ENCODE measurements at regions of chr2 and their contacts with region 1.

Region 1: GRCh38 chr2:218269899-218270720 is at the starts of genes AAMP and PNKD:
- DNase-seq: peak; percentile 100
- ATAC-seq: peak; percentile 83
- H3K4me3 ChIP-seq: peak within 1 kb of the TSS; percentile 69 to 99 (median 97)
- H3K4me3 Mint-ChIP-seq: peak within 1 kb of the TSS; percentile 84
- H3K27ac ChIP-seq: peak within 1 kb of the TSS; percentile 49 to 82
- H3K27ac Mint-ChIP-seq: peak within 1 kb of the TSS; percentile 86
- H3K4me1 ChIP-seq: peaks cover 36 to 53% of the 10 kb centered on the region in 2 donors
- H3K4me1 Mint-ChIP-seq: peaks cover 59% of the 10 kb centered on the region
- H3K27me3 ChIP-seq: no peaks in the 10 kb centered on the region
- H3K27me3 Mint-ChIP-seq: no peaks in the 10 kb centered on the region
- CTCF ChIP-seq: no peak
- total RNA-seq, gene AAMP: 62.7 and 65.7 TPM in 2 replicates
- total RNA-seq, gene PNKD: 29.7 and 30.7 TPM in 2 replicates

Region 2: DNA sequence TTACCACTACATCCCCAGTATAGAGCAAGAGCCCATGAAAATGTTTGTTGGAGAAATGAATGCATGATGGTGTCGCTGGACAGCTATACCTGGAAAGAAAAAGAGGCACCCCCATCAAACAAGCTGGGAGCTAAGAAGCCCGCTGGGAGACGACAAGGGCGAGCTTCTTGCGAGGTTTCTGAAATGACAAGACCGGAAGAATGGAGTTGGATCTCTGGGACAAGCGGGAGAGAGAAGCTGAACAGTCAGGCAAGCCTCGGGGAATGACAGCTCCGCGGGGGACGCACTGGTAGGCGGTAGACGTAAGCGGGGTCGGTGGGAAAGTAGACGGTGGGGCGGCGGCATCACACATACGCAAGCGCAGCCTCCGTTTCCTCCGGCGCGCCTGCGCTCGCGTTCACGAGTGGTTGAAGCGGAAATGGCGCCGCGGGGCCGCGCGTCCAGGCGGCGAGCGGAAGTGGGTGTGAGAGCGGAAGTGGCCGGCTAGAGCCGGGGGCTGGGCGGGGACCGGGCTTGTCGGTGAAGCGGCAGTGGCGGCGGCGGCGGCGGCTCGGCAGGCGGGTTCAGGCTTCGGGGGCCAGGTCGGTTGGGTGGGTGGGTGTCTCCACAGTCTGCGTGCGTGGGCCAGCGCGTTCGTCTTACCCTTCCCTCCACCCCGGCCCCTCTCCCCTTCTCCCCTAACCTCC is 53.3 kb before region 1 on chr2 and contains the start of gene ARPC2:
- CTCF ChIA-PET with region 1: interaction called, 16 read pairs
- POLR2A ChIA-PET with region 1: interaction called, 11 read pairs
- intact Hi-C with region 1: loop called (anchors 1 kb)
- DNase-seq: peak; percentile 98
- ATAC-seq: peak; percentile 74
- H3K4me3 ChIP-seq: peak within 1 kb of the TSS; percentile 93 to 99 (median 97)
- H3K4me3 Mint-ChIP-seq: peak within 1 kb of the TSS; percentile 90
- H3K27ac ChIP-seq: peak within 1 kb of the TSS; percentile 95 to 99
- H3K27ac Mint-ChIP-seq: peak within 1 kb of the TSS; percentile 94
- H3K4me1 ChIP-seq: peaks cover 36 to 45% of the 10 kb centered on the region in 2 donors
- H3K4me1 Mint-ChIP-seq: peaks cover 43% of the 10 kb centered on the region
- H3K27me3 ChIP-seq: no peaks in the 10 kb centered on the region
- H3K27me3 Mint-ChIP-seq: no peaks in the 10 kb centered on the region
- CTCF ChIP-seq: no peak
- total RNA-seq, gene ARPC2: 343 and 352 TPM in 2 replicates

Region 3: GRCh38 chr2:218292048-218293014 is 22.2 kb after region 1 on chr2 and contains the start of gene TMBIM1:
- CTCF ChIA-PET with region 1: interaction called, 331 read pairs
- POLR2A ChIA-PET with region 1: interaction called, 36 read pairs
- intact Hi-C with region 1: loop called (anchors 1 kb)
- DNase-seq: peak; percentile 90
- ATAC-seq: peak; percentile 72
- H3K4me3 ChIP-seq: peak within 1 kb of the TSS; percentile 50 to 95 (median 87)
- H3K4me3 Mint-ChIP-seq: peak within 1 kb of the TSS; percentile 89
- H3K27ac ChIP-seq: peak within 1 kb of the TSS; percentile 92 to 98
- H3K27ac Mint-ChIP-seq: peak within 1 kb of the TSS; percentile 93
- H3K4me1 ChIP-seq: peaks cover 57 to 71% of the 10 kb centered on the region in 2 donors
- H3K4me1 Mint-ChIP-seq: peaks cover 60% of the 10 kb centered on the region
- H3K27me3 ChIP-seq: no peaks in the 10 kb centered on the region
- H3K27me3 Mint-ChIP-seq: no peaks in the 10 kb centered on the region
- CTCF ChIP-seq: peak; percentile 90
- total RNA-seq, gene TMBIM1: 128 and 137 TPM in 2 replicates

Region 4: GRCh38 chr2:218360447-218360846 is 90.3 kb after region 1 on chr2:
- CTCF ChIA-PET with region 1: interaction called, 139 read pairs
- POLR2A ChIA-PET with region 1: interaction called, 11 read pairs
- intact Hi-C with region 1: loop called (anchors 1 kb)
- DNase-seq: no peak
- ATAC-seq: no peak
- H3K4me3 ChIP-seq: no peak overlapping the region
- H3K4me3 Mint-ChIP-seq: no peak overlapping the region
- H3K27ac ChIP-seq: no peak overlapping the region
- H3K27ac Mint-ChIP-seq: no peak overlapping the region
- H3K4me1 ChIP-seq: peaks cover 0 to 7% of the 10 kb centered on the region in 2 donors
- H3K4me1 Mint-ChIP-seq: peaks cover 4% of the 10 kb centered on the region
- H3K27me3 ChIP-seq: no peaks in the 10 kb centered on the region
- H3K27me3 Mint-ChIP-seq: no peaks in the 10 kb centered on the region
- CTCF ChIP-seq: no peak

Region 5: GRCh38 chr2:218418717-218419458 is 148.8 kb after region 1 on chr2 and contains the start of gene VIL1:
- CTCF ChIA-PET with region 1: no interaction called
- POLR2A ChIA-PET with region 1: no interaction called
- intact Hi-C with region 1: no loop called
- DNase-seq: no peak
- ATAC-seq: no peak
- H3K4me3 ChIP-seq: no peak within 1 kb of the TSS
- H3K4me3 Mint-ChIP-seq: no peak within 1 kb of the TSS
- H3K27ac ChIP-seq: no peak within 1 kb of the TSS
- H3K27ac Mint-ChIP-seq: no peak within 1 kb of the TSS
- H3K4me1 ChIP-seq: no peaks in the 10 kb centered on the region
- H3K4me1 Mint-ChIP-seq: no peaks in the 10 kb centered on the region
- H3K27me3 ChIP-seq: no peaks in the 10 kb centered on the region
- H3K27me3 Mint-ChIP-seq: no peaks in the 10 kb centered on the region
- CTCF ChIP-seq: no peak
- total RNA-seq, gene VIL1: not detected in 2 replicates

Region 6: GRCh38 chr2:218659258-218659987 is 389.3 kb after region 1 on chr2 and contains the starts of genes BCS1L and ZNF142:
- CTCF ChIA-PET with region 1: no interaction called
- POLR2A ChIA-PET with region 1: interaction called, 3 read pairs
- intact Hi-C with region 1: loop called (anchors 1 kb)
- DNase-seq: peak; percentile 91
- ATAC-seq: peak; percentile 97
- H3K4me3 ChIP-seq: peak within 1 kb of the TSS; percentile 65 to 93 (median 81)
- H3K4me3 Mint-ChIP-seq: peak within 1 kb of the TSS; percentile 99
- H3K27ac ChIP-seq: peak within 1 kb of the TSS; percentile 46 to 77
- H3K27ac Mint-ChIP-seq: peak within 1 kb of the TSS; percentile 95
- H3K4me1 ChIP-seq: peaks cover 12 to 16% of the 10 kb centered on the region in 2 donors
- H3K4me1 Mint-ChIP-seq: peaks cover 28% of the 10 kb centered on the region
- H3K27me3 ChIP-seq: no peaks in the 10 kb centered on the region
- H3K27me3 Mint-ChIP-seq: no peaks in the 10 kb centered on the region
- CTCF ChIP-seq: no peak
- total RNA-seq, gene BCS1L: 56.1 and 60.1 TPM in 2 replicates
- total RNA-seq, gene ZNF142: 51.1 and 56.1 TPM in 2 replicates

Region 7: GRCh38 chr2:219218732-219219701 is 948.9 kb after region 1 on chr2 and contains the start of gene ABCB6:
- CTCF ChIA-PET with region 1: no interaction called
- POLR2A ChIA-PET with region 1: no interaction called
- intact Hi-C with region 1: no loop called
- DNase-seq: peak; percentile 92
- ATAC-seq: peak; percentile 95
- H3K4me3 ChIP-seq: peak within 1 kb of the TSS; percentile 51 to 74 (median 66)
- H3K4me3 Mint-ChIP-seq: peak within 1 kb of the TSS; percentile 87
- H3K27ac ChIP-seq: peak within 1 kb of the TSS; percentile 0 to 55
- H3K27ac Mint-ChIP-seq: peak within 1 kb of the TSS; percentile 86
- H3K4me1 ChIP-seq: peaks cover 17 to 21% of the 10 kb centered on the region in 2 donors
- H3K4me1 Mint-ChIP-seq: peaks cover 20% of the 10 kb centered on the region
- H3K27me3 ChIP-seq: no peaks in the 10 kb centered on the region
- H3K27me3 Mint-ChIP-seq: no peaks in the 10 kb centered on the region
- CTCF ChIP-seq: no peak
- total RNA-seq, gene ABCB6: 10.5 and 12.3 TPM in 2 replicates

Region 8: GRCh38 chr2:219597552-219598307 is 1327.6 kb after region 1 on chr2 and contains the start of gene STK11IP:
- CTCF ChIA-PET with region 1: no interaction called
- POLR2A ChIA-PET with region 1: no interaction called
- intact Hi-C with region 1: loop called (anchors 5 kb)
- DNase-seq: peak; percentile 96
- ATAC-seq: peak; percentile 88
- H3K4me3 ChIP-seq: peak within 1 kb of the TSS; percentile 69 to 88 (median 86)
- H3K4me3 Mint-ChIP-seq: peak within 1 kb of the TSS; percentile 98
- H3K27ac ChIP-seq: peak within 1 kb of the TSS; percentile 59 to 88
- H3K27ac Mint-ChIP-seq: peak within 1 kb of the TSS; percentile 98
- H3K4me1 ChIP-seq: peaks cover 10 to 12% of the 10 kb centered on the region in 2 donors
- H3K4me1 Mint-ChIP-seq: peaks cover 23% of the 10 kb centered on the region
- H3K27me3 ChIP-seq: peaks cover 0 to 11% (median 0%) of the 10 kb centered on the region in 4 experiments
- H3K27me3 Mint-ChIP-seq: peaks cover 10% of the 10 kb centered on the region
- CTCF ChIP-seq: no peak
- total RNA-seq, gene STK11IP: 55.6 and 60.8 TPM in 2 replicates